ENCODE measurements at regions of chr16 and their contacts with region 1.

Region 1: GRCh38 chr16:74480141-74481029 is 59.1 kb upstream of the CLEC18B start:
- DNase-seq: peak; percentile 71
- ATAC-seq: peak; percentile 97
- H3K4me3 ChIP-seq: peak overlapping the region in 1 of 2 experiments; percentile 6; a peak in 1 of 4 replicates
- H3K27ac ChIP-seq: peak overlapping the region; percentile 57
- H3K4me1 ChIP-seq: peaks cover 24% of the 10 kb centered on the region in 2 experiments
- H3K27me3 ChIP-seq: no peaks in the 10 kb centered on the region
- CTCF ChIP-seq: no peak
- POLR2A ChIP-seq: no peak
- RAD21 ChIP-seq: no peak; the same call in 1 of the 2 replicates

Region 2: GRCh38 chr16:74462356-74462755 is 18.0 kb before region 1 on chr16:
- CTCF ChIA-PET with region 1: no interaction called
- POLR2A ChIA-PET with region 1: no interaction called
- RAD21 ChIA-PET with region 1: no interaction called
- intact Hi-C with region 1: no loop called
- DNase-seq: no peak
- ATAC-seq: no peak
- H3K4me3 ChIP-seq: no peak overlapping the region
- H3K27ac ChIP-seq: no peak overlapping the region; the same call in 1 of the 2 replicates
- H3K4me1 ChIP-seq: no peaks in the 10 kb centered on the region
- H3K27me3 ChIP-seq: no peaks in the 10 kb centered on the region
- CTCF ChIP-seq: no peak
- POLR2A ChIP-seq: no peak
- RAD21 ChIP-seq: no peak

Region 3: DNA sequence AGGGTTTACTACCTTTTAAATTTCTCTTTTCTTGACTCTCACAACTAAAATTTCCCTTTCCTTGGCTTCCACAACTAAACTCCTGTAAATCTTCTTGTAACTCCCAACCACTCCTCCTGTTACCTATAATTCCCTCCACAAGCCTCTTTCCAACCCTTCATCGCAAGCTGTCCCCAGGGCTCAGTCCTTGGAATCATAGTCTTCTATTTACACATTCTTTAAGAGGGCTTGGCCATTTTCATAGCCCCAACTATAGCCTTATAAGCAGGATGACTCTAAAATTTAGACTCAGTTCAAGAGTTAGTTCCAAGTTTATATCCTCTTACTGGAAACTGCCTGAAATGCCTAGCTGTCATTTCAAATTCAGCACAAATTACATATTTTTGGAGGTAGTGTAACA is 102.6 kb after region 1 on chr16:
- CTCF ChIA-PET with region 1: no interaction called
- POLR2A ChIA-PET with region 1: no interaction called
- RAD21 ChIA-PET with region 1: no interaction called
- intact Hi-C with region 1: no loop called
- DNase-seq: no peak
- ATAC-seq: no peak
- H3K4me3 ChIP-seq: no peak overlapping the region
- H3K27ac ChIP-seq: peak overlapping the region; percentile 6
- H3K4me1 ChIP-seq: peaks cover 80 to 83% of the 10 kb centered on the region in 2 experiments
- H3K27me3 ChIP-seq: no peaks in the 10 kb centered on the region
- CTCF ChIP-seq: no peak
- POLR2A ChIP-seq: no peak
- RAD21 ChIP-seq: no peak

Region 4: DNA sequence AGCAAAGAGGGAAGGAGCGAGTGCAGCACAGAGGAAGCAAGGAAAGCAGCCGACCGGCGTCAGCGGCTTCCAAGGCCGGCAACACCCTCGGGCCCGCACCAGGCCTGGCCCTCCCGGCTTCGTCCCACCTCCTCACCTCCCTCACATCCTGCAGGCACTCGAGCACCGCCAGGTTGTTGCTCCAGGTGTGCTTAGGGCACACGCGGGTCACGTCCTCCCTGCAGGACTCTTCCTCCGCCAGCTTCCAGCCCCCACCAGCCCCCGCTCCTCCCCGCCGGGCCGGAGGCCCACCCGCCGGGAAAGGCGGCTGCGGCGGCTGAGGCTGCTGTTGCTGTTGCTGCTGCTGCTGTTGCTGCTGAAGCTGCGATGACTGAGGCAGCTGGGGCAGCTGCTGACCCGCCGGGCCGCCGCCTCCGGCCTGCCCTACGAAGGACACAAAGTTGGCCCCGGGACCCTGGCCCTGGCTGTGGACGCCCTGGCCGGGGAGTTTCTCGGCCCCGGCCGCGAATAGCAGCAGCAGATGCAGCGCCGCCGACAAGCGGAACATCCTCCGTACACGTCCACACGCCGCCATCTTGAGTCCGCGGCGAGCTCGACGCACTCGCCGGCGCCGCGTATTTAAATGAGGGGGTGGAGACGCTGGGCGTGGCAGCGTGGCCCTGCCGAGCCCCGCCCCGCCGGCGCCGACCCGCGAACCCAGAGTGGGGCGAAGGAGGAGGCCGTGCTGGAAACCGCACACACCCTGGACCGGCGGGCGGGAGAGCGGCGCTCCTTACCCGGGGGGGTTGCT is 126.3 kb after region 1 on chr16 and contains the start of gene GLG1:
- CTCF ChIA-PET with region 1: no interaction called
- POLR2A ChIA-PET with region 1: no interaction called
- RAD21 ChIA-PET with region 1: no interaction called
- intact Hi-C with region 1: loop called (anchors 10 kb)
- DNase-seq: peak; percentile 65
- ATAC-seq: peak; percentile 86
- H3K4me3 ChIP-seq: peak within 1 kb of the TSS; percentile 85 to 96
- H3K27ac ChIP-seq: peak within 1 kb of the TSS; percentile 97
- H3K4me1 ChIP-seq: peaks cover 39 to 55% of the 10 kb centered on the region in 2 experiments
- H3K27me3 ChIP-seq: no peaks in the 10 kb centered on the region
- CTCF ChIP-seq: no peak
- POLR2A ChIP-seq: peak; percentile 91
- RAD21 ChIP-seq: peak; percentile 30
- total RNA-seq, gene GLG1: 237 TPM